Aorta (tissue), 5 donors: ENCODE measurements at regions of chr19 and their contacts with region 1.

Region 1: GRCh38 chr19:46265217-46265828 is 31.5 kb upstream of the HIF3A start:
- DNase-seq: no peak
- ATAC-seq: no peak
- H3K4me3 ChIP-seq: no peak overlapping the region
- H3K27ac ChIP-seq: no peak overlapping the region
- H3K4me1 ChIP-seq: no peaks in the 10 kb centered on the region
- H3K27me3 ChIP-seq: no peaks in the 10 kb centered on the region

Region 2: DNA sequence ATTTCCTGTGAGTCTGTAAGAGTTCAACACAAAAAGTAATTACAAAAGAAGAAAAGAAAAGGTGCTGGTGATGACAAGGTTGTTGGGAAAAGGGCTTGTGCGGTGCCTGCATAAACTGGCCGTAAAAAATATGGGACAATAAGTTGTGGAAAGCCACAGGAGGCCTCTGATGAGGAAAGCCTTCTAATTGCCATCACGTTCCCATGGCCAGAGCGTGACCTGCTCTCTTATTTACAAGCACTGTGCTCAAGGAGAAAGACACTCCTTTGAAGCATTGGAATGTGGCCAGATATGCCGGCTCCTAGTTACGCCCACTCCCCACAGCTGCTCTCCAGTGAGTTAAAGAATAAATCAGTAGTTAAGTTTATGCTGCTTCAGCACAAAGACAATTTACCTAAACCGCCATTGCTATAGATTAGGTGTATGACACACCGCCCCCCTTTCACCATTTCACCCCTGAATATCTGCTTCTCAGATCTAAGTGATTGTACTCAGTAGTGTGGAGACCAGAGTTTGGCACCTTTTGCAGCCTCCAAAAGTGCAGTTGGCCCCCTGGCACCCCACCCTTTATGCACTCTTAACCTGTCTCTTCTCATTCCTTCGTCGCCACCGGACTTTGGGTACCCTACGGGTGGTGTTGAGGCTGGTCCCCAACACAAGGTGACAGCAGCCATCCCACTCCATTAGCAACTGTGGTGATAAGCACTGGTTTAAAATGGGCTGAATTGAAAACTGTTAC is 234.3 kb before region 1 on chr19:
- intact Hi-C with region 1: loop called (anchors 1 to 2 kb)
- DNase-seq: no peak
- ATAC-seq: no peak
- H3K4me3 ChIP-seq: no peak overlapping the region
- H3K27ac ChIP-seq: no peak overlapping the region
- H3K4me1 ChIP-seq: no peaks in the 10 kb centered on the region
- H3K27me3 ChIP-seq: no peaks in the 10 kb centered on the region

Region 3: GRCh38 chr19:46081928-46082727 is 183.2 kb before region 1 on chr19:
- intact Hi-C with region 1: loop called (anchors 2 to 5 kb)
- DNase-seq: no peak
- ATAC-seq: no peak
- H3K4me3 ChIP-seq: no peak overlapping the region
- H3K27ac ChIP-seq: no peak overlapping the region
- H3K4me1 ChIP-seq: no peaks in the 10 kb centered on the region
- H3K27me3 ChIP-seq: peaks cover 0 to 7% of the 10 kb centered on the region in 2 donors

Region 4: GRCh38 chr19:46173886-46174507 is 91.3 kb before region 1 on chr19:
- intact Hi-C with region 1: no loop called
- DNase-seq: no peak
- ATAC-seq: no peak
- H3K4me3 ChIP-seq: no peak overlapping the region
- H3K27ac ChIP-seq: no peak overlapping the region
- H3K4me1 ChIP-seq: no peaks in the 10 kb centered on the region
- H3K27me3 ChIP-seq: no peaks in the 10 kb centered on the region

Region 5: DNA sequence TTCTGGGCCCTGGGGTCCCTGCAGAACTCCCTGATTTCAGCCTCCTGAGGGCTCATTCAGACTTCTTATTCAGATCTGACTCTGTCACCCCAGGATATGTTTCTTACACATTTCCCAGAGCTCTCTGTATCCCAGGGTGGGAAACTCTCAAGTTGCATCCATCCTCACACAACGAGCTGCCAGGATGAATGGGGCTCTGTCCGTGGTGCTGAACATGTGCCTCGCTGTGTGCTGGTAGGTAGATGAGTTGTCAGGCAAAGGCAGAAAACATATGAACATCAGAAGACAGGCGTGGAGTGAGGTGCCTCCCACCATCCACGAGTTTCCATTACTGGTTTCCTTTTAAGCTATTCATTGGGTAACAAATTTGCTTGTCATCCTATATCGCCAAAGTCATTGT is 47.2 kb before region 1 on chr19:
- intact Hi-C with region 1: no loop called
- DNase-seq: no peak
- ATAC-seq: no peak
- H3K4me3 ChIP-seq: no peak overlapping the region
- H3K27ac ChIP-seq: no peak overlapping the region
- H3K4me1 ChIP-seq: no peaks in the 10 kb centered on the region
- H3K27me3 ChIP-seq: no peaks in the 10 kb centered on the region

Region 6: DNA sequence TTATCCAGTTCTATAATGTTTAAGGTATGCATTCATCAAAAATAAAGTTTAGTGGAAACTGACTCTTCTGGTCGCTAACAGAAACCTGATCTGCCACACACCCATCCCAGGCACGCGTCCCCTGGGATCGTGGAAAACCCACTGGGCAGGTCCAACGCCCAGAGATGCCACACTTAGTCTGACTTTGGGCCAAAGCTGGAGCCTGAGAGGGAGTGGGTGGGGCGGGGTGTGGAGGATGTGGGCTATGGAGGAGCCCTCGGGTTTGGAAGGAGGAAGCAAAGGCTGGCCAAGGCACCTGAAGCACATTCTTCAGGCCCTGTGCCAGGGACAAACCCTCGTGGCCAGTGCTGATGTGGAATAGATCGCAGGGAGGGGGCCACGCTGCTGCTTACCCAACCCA is 33.3 kb before region 1 on chr19:
- intact Hi-C with region 1: no loop called
- DNase-seq: no peak
- ATAC-seq: no peak
- H3K4me3 ChIP-seq: no peak overlapping the region
- H3K27ac ChIP-seq: no peak overlapping the region
- H3K4me1 ChIP-seq: no peaks in the 10 kb centered on the region
- H3K27me3 ChIP-seq: no peaks in the 10 kb centered on the region

Region 7: GRCh38 chr19:46288896-46289588 is 23.7 kb after region 1 on chr19:
- intact Hi-C with region 1: no loop called
- DNase-seq: no peak
- ATAC-seq: peak; percentile 67
- H3K4me3 ChIP-seq: no peak overlapping the region
- H3K27ac ChIP-seq: peak overlapping the region in 1 of 2 donors; percentile 75
- H3K4me1 ChIP-seq: peaks cover 0 to 5% of the 10 kb centered on the region in 2 donors
- H3K27me3 ChIP-seq: no peaks in the 10 kb centered on the region